ENCODE measurements at regions of chr11 and their contacts with region 1.

Region 1: GRCh38 chr11:17161515-17161914 is 46.3 kb downstream of the PIK3C2A start:
- DNase-seq: no peak
- ATAC-seq: no peak
- H3K4me3 Mint-ChIP-seq: no peak overlapping the region
- H3K27ac Mint-ChIP-seq: no peak overlapping the region
- H3K4me1 Mint-ChIP-seq: peaks cover 54% of the 10 kb centered on the region
- H3K27me3 Mint-ChIP-seq: no peaks in the 10 kb centered on the region
- CTCF ChIP-seq: no peak

Region 2: GRCh38 chr11:17116121-17116520 is 45.4 kb before region 1 on chr11:
- CTCF ChIA-PET with region 1: no interaction called
- POLR2A ChIA-PET with region 1: no interaction called
- intact Hi-C with region 1: no loop called
- DNase-seq: no peak
- ATAC-seq: no peak
- H3K4me3 Mint-ChIP-seq: no peak overlapping the region
- H3K27ac Mint-ChIP-seq: no peak overlapping the region
- H3K4me1 Mint-ChIP-seq: no peaks in the 10 kb centered on the region
- H3K27me3 Mint-ChIP-seq: no peaks in the 10 kb centered on the region
- CTCF ChIP-seq: no peak

Region 3: DNA sequence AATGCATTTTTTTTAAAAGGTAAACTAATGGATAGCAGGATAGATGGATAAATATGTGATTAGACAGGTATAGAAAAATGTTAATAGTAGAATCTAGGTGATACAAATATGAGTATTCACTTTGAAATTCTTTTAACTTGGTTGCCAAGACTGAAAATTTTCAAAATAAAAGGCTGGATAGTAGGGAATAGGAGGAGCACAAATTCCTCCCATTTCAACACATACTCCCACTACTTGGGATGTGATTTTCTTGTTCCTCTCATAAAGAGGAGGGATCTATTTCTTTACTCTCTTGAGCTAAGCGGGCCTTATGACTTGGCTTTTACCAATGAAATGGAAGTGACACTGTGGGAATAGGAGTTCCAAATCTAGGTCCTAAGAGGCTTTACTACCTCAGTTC is 10.4 kb after region 1 on chr11:
- CTCF ChIA-PET with region 1: no interaction called
- POLR2A ChIA-PET with region 1: no interaction called
- intact Hi-C with region 1: loop called (anchors 2 kb)
- DNase-seq: no peak
- ATAC-seq: no peak
- H3K4me3 Mint-ChIP-seq: no peak overlapping the region
- H3K27ac Mint-ChIP-seq: no peak overlapping the region
- H3K4me1 Mint-ChIP-seq: peaks cover 4% of the 10 kb centered on the region
- H3K27me3 Mint-ChIP-seq: no peaks in the 10 kb centered on the region
- CTCF ChIP-seq: no peak